GM12878 (cell line): ENCODE measurements at regions of chr22 and their contacts with region 1.

Region 1: GRCh38 chr22:44037519-44038370 is 13.6 kb downstream of the PARVB start:
- DNase-seq: no peak
- ATAC-seq: no peak
- H3K4me3 ChIP-seq: no peak overlapping the region
- H3K27ac ChIP-seq: no peak overlapping the region
- H3K4me1 ChIP-seq: peaks cover 18% of the 10 kb centered on the region
- H3K27me3 ChIP-seq: no peaks in the 10 kb centered on the region
- CTCF ChIP-seq: no peak
- EP300 ChIP-seq: no peak
- POLR2A ChIP-seq: no peak
- RAD21 ChIP-seq: no peak

Region 2: GRCh38 chr22:43931771-43932170 is 106.0 kb before region 1 on chr22:
- CTCF ChIA-PET with region 1: no interaction called
- POLR2A ChIA-PET with region 1: no interaction called
- RAD21 ChIA-PET with region 1: no interaction called
- SMC1A ChIA-PET with region 1: no interaction called
- in situ Hi-C with region 1: no loop called
- intact Hi-C with region 1: no loop called
- DNase-seq: no peak
- ATAC-seq: no peak
- H3K4me3 ChIP-seq: no peak overlapping the region
- H3K27ac ChIP-seq: no peak overlapping the region
- H3K4me1 ChIP-seq: no peaks in the 10 kb centered on the region
- H3K27me3 ChIP-seq: no peaks in the 10 kb centered on the region; a peak in 1 of 4 replicates
- CTCF ChIP-seq: no peak
- EP300 ChIP-seq: no peak
- POLR2A ChIP-seq: no peak
- RAD21 ChIP-seq: no peak

Region 3: GRCh38 chr22:44068422-44069191 is 30.9 kb after region 1 on chr22:
- CTCF ChIA-PET with region 1: interaction called, 10 read pairs
- POLR2A ChIA-PET with region 1: interaction called, 9 read pairs
- RAD21 ChIA-PET with region 1: interaction called, 5 read pairs
- SMC1A ChIA-PET with region 1: interaction called, 3 read pairs
- in situ Hi-C with region 1: no loop called
- intact Hi-C with region 1: no loop called
- DNase-seq: peak; percentile 56
- ATAC-seq: peak; percentile 84
- H3K4me3 ChIP-seq: peak overlapping the region; percentile 18; the same call in 1 of the 2 replicates
- H3K27ac ChIP-seq: peak overlapping the region; percentile 78
- H3K4me1 ChIP-seq: peaks cover 39% of the 10 kb centered on the region
- H3K27me3 ChIP-seq: no peaks in the 10 kb centered on the region
- CTCF ChIP-seq: peak; percentile 4 to 21 (median 6); a peak in 2 of 6 replicates
- EP300 ChIP-seq: 0 out of 4 replicates have a peak, but pooled peaks of 1 of the 2 experiments have one; percentile 5
- POLR2A ChIP-seq: no peak
- RAD21 ChIP-seq: no peak